GM10248 (cell line): ENCODE measurements at regions of chr1 and their contacts with region 1.

Region 1: GRCh38 chr1:54226073-54226472 is 26.1 kb downstream of the MRPL37 start:
- DNase-seq: no peak
- CTCF ChIP-seq: no peak

Region 2: DNA sequence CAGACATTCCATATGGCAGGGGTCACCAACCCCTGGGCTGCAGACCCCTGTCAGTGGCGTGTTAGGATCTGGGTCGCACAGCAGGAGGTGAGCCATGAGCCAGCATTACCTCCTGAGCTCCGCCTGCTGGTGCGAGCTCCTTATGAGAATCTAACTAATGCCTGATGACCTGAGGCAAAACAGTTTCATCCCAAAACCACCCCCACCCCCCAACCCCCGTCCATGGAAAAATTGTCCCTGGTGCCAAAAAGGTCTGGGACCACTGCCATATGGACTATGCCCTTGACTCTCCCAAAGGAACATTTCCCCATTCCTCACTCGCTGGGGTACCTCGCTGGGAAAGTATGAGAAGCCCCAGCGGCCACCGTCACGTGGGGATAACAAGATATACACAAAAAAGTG is 1035.9 kb before region 1 on chr1:
- CTCF ChIA-PET with region 1: no interaction called
- POLR2A ChIA-PET with region 1: interaction called, 11 read pairs
- DNase-seq: no peak
- CTCF ChIP-seq: no peak

Region 3: DNA sequence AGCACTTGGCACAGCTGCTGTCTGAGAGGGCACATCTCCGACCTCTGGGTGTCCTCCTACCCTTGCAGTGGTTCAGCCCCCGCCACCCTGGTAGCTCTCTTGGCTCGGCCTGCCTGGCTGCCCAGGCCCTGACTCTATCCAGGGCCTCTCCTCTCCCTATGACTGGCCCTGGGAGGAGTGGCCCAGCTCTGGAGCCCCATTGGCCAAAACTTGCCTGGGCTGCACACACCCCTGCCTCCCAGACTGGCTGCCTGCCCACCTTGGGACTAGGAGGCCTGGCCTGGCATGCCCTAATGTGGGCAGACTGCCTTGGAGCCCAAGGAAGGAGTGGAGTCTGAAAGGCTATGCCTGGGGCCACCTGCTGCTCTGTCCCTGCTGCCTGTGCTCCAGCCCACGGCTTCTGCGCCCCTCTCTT is 355.6 kb after region 1 on chr1:
- CTCF ChIA-PET with region 1: no interaction called
- POLR2A ChIA-PET with region 1: no interaction called
- DNase-seq: no peak
- CTCF ChIP-seq: no peak